ENCODE measurements at regions of chr3 and their contacts with region 1.

Region 1: GRCh38 chr3:172550347-172550943 is 27.2 kb upstream of the TNFSF10 start:
- DNase-seq: peak in 1 of 9 donors; percentile 69
- ATAC-seq: peak; percentile 82
- H3K4me3 ChIP-seq: no peak overlapping the region
- H3K4me3 Mint-ChIP-seq: peak overlapping the region in 1 of 10 donors; percentile 6
- H3K27ac ChIP-seq: no peak overlapping the region
- H3K27ac Mint-ChIP-seq: peak overlapping the region in 1 of 9 donors; percentile 80
- H3K4me1 ChIP-seq: peaks cover 0 to 16% of the 10 kb centered on the region in 2 donors
- H3K4me1 Mint-ChIP-seq: peaks cover 19 to 62% (median 39%) of the 10 kb centered on the region in 7 donors
- H3K27me3 ChIP-seq: no peaks in the 10 kb centered on the region
- H3K27me3 Mint-ChIP-seq: no peaks in the 10 kb centered on the region

Region 2: DNA sequence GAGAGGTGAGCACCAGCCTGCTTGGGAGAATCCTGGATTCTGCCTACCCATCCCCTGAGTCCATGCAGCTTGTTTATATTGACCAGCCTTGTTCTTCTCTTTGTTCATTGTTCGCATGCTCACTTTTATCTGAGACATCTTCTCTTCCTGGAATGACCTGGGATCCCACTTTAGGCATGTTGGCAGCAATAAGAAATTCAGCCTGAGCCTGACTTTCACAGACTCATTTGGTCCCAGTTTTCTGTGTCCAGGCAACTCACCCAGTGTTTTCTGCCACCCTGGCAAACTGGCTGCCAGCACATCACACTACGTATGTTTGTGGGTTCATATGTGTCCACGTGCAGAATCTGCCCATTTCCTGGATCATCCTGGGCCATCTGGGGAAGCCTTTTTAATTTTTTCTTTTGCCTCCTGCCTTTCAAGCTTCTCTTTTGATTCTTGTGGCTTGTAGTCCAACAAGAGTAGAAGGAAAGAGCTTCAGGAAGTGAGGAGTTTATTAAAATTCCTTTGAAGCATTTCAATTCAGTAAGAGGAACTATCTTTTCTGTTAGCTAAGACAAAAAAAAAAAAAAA is 311.1 kb before region 1 on chr3:
- CTCF ChIA-PET with region 1: no interaction called
- POLR2A ChIA-PET with region 1: no interaction called
- intact Hi-C with region 1: no loop called
- DNase-seq: no peak
- ATAC-seq: no peak
- H3K4me3 ChIP-seq: no peak overlapping the region
- H3K4me3 Mint-ChIP-seq: no peak overlapping the region
- H3K27ac ChIP-seq: no peak overlapping the region
- H3K27ac Mint-ChIP-seq: no peak overlapping the region
- H3K4me1 ChIP-seq: no peaks in the 10 kb centered on the region
- H3K4me1 Mint-ChIP-seq: peaks cover 0 to 29% (median 19%) of the 10 kb centered on the region in 7 donors
- H3K27me3 ChIP-seq: no peaks in the 10 kb centered on the region
- H3K27me3 Mint-ChIP-seq: no peaks in the 10 kb centered on the region

Region 3: GRCh38 chr3:172270557-172271166 is 279.8 kb before region 1 on chr3:
- CTCF ChIA-PET with region 1: no interaction called
- POLR2A ChIA-PET with region 1: no interaction called
- intact Hi-C with region 1: no loop called
- DNase-seq: no peak
- ATAC-seq: no peak
- H3K4me3 ChIP-seq: no peak overlapping the region
- H3K4me3 Mint-ChIP-seq: no peak overlapping the region
- H3K27ac ChIP-seq: no peak overlapping the region
- H3K27ac Mint-ChIP-seq: no peak overlapping the region
- H3K4me1 ChIP-seq: no peaks in the 10 kb centered on the region
- H3K4me1 Mint-ChIP-seq: peaks cover 0 to 3% (median 0%) of the 10 kb centered on the region in 7 donors
- H3K27me3 ChIP-seq: no peaks in the 10 kb centered on the region
- H3K27me3 Mint-ChIP-seq: no peaks in the 10 kb centered on the region

Region 4: GRCh38 chr3:172511783-172512762 is 38.4 kb before region 1 on chr3:
- CTCF ChIA-PET with region 1: no interaction called
- POLR2A ChIA-PET with region 1: no interaction called
- intact Hi-C with region 1: loop called in 1 of 2 experiments (anchors 5 kb)
- DNase-seq: peak in 7 of 9 donors; percentile 28 to 76 (median 48)
- ATAC-seq: peak; percentile 87
- H3K4me3 ChIP-seq: peak overlapping the region; percentile 2
- H3K4me3 Mint-ChIP-seq: peak overlapping the region; percentile 62 to 93 (median 80)
- H3K27ac ChIP-seq: peak overlapping the region; percentile 61
- H3K27ac Mint-ChIP-seq: peak overlapping the region; percentile 88 to 100 (median 93)
- H3K4me1 ChIP-seq: peaks cover 52 to 56% of the 10 kb centered on the region in 2 donors
- H3K4me1 Mint-ChIP-seq: peaks cover 65 to 91% (median 84%) of the 10 kb centered on the region in 7 donors
- H3K27me3 ChIP-seq: no peaks in the 10 kb centered on the region
- H3K27me3 Mint-ChIP-seq: no peaks in the 10 kb centered on the region

Region 5: GRCh38 chr3:172530566-172530965 is 19.9 kb before region 1 on chr3:
- CTCF ChIA-PET with region 1: interaction called, 3 read pairs
- POLR2A ChIA-PET with region 1: interaction called, 6 read pairs
- intact Hi-C with region 1: loop called in 1 of 2 experiments (anchors 1 kb)
- DNase-seq: peak in 4 of 9 donors; percentile 31 to 43 (median 38)
- ATAC-seq: peak; percentile 83
- H3K4me3 ChIP-seq: peak overlapping the region; percentile 2
- H3K4me3 Mint-ChIP-seq: peak overlapping the region in 9 of 10 donors; percentile 14 to 84 (median 69)
- H3K27ac ChIP-seq: peak overlapping the region; percentile 9
- H3K27ac Mint-ChIP-seq: peak overlapping the region; percentile 40 to 93 (median 80)
- H3K4me1 ChIP-seq: peaks cover 14 to 18% of the 10 kb centered on the region in 2 donors
- H3K4me1 Mint-ChIP-seq: peaks cover 15 to 69% (median 30%) of the 10 kb centered on the region in 7 donors
- H3K27me3 ChIP-seq: no peaks in the 10 kb centered on the region
- H3K27me3 Mint-ChIP-seq: no peaks in the 10 kb centered on the region

Region 6: GRCh38 chr3:172536993-172537419 is 13.4 kb before region 1 on chr3:
- CTCF ChIA-PET with region 1: interaction called, 3 read pairs
- POLR2A ChIA-PET with region 1: interaction called, 6 read pairs
- intact Hi-C with region 1: loop called (anchors 1 kb)
- DNase-seq: peak in 2 of 9 donors; percentile 32 to 40
- ATAC-seq: peak; percentile 80
- H3K4me3 ChIP-seq: no peak overlapping the region
- H3K4me3 Mint-ChIP-seq: peak overlapping the region; percentile 50 to 77 (median 62)
- H3K27ac ChIP-seq: peak overlapping the region; percentile 41
- H3K27ac Mint-ChIP-seq: peak overlapping the region; percentile 69 to 90 (median 82)
- H3K4me1 ChIP-seq: peaks cover 15 to 33% of the 10 kb centered on the region in 2 donors
- H3K4me1 Mint-ChIP-seq: peaks cover 16 to 66% (median 46%) of the 10 kb centered on the region in 7 donors
- H3K27me3 ChIP-seq: no peaks in the 10 kb centered on the region
- H3K27me3 Mint-ChIP-seq: no peaks in the 10 kb centered on the region

Region 7: DNA sequence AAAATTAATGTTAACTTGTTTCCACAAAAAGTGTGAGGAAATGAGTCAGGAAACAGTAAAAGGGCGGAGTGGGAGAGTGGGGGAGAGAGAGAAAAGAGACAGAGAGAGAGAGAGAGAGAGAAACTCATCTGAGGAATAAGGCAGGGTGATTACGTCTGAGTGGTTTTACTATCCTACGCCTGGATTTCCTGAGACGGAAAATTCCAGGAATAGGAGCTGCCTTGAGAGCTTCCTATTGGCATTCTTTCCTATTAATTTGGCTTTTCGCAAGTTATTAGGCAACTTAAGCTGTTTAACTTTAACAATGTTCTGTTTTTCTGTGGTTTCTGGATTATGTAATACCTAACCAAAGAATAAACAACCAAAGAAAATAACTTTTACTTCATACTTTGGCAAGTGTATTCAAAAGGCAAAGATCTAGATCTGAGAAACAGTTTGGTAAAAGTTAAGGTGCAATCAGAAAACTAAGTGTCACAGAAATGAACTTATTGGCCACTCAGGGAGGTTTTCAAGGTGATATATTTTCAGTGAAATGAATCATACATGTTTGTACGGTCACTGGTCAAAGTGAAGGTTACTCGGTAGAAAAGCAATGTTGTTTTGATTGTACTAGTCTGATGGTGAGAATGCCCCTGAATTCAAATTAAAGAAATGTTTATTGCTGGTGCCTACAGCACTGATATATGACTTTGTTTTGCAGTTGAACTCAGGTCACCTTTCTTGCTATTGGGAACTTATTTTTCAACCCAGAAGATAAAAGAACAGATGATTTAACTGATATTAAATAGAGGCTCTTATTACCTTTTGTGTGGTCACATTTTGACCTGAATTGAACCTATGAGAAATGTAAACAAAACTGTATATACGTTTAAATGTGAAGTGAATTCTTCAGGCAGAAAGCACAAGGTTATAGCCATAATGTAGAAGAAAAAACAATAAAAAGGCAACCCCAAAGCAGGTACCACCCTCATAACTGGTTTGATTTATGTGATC is 12.7 kb after region 1 on chr3:
- CTCF ChIA-PET with region 1: no interaction called
- POLR2A ChIA-PET with region 1: no interaction called
- intact Hi-C with region 1: loop called in 1 of 2 experiments (anchors 2 kb)
- DNase-seq: peak in 3 of 9 donors; percentile 19 to 38 (median 22)
- ATAC-seq: peak; percentile 26
- H3K4me3 ChIP-seq: peak overlapping the region; percentile 26
- H3K4me3 Mint-ChIP-seq: peak overlapping the region in 9 of 10 donors; percentile 36 to 82 (median 66)
- H3K27ac ChIP-seq: no peak overlapping the region
- H3K27ac Mint-ChIP-seq: peak overlapping the region; percentile 22 to 92 (median 77)
- H3K4me1 ChIP-seq: peaks cover 0 to 15% of the 10 kb centered on the region in 2 donors
- H3K4me1 Mint-ChIP-seq: peaks cover 15 to 54% (median 26%) of the 10 kb centered on the region in 7 donors
- H3K27me3 ChIP-seq: no peaks in the 10 kb centered on the region
- H3K27me3 Mint-ChIP-seq: no peaks in the 10 kb centered on the region

Measured in naive thymus-derived CD4-positive, alpha-beta T cell (primary cell).